ENCODE measurements at regions of chr12 and their contacts with region 1.

Region 1: GRCh38 chr12:124388679-124389536 is 94.0 kb downstream of the RFLNA start:
- DNase-seq: peak; percentile 45 to 81 (median 68)
- ATAC-seq: peak; percentile 80
- H3K4me3 ChIP-seq: peak overlapping the region; percentile 53
- H3K4me3 Mint-ChIP-seq: peak overlapping the region; percentile 76
- H3K27ac ChIP-seq: no peak overlapping the region
- H3K27ac Mint-ChIP-seq: peak overlapping the region; percentile 69
- H3K4me1 ChIP-seq: peaks cover 54% of the 10 kb centered on the region
- H3K4me1 Mint-ChIP-seq: peaks cover 22% of the 10 kb centered on the region
- H3K27me3 ChIP-seq: no peaks in the 10 kb centered on the region
- H3K27me3 Mint-ChIP-seq: no peaks in the 10 kb centered on the region
- CTCF ChIP-seq: no peak

Region 2: GRCh38 chr12:123713398-123713797 is 675.5 kb before region 1 on chr12:
- CTCF ChIA-PET with region 1: no interaction called
- POLR2A ChIA-PET with region 1: no interaction called
- intact Hi-C with region 1: no loop called
- DNase-seq: peak in 1 of 14 experiments; percentile 17
- ATAC-seq: no peak
- H3K4me3 ChIP-seq: peak overlapping the region; percentile 87
- H3K4me3 Mint-ChIP-seq: peak overlapping the region; percentile 85
- H3K27ac ChIP-seq: no peak overlapping the region
- H3K27ac Mint-ChIP-seq: peak overlapping the region; percentile 62
- H3K4me1 ChIP-seq: peaks cover 27% of the 10 kb centered on the region
- H3K4me1 Mint-ChIP-seq: peaks cover 38% of the 10 kb centered on the region
- H3K27me3 ChIP-seq: no peaks in the 10 kb centered on the region
- H3K27me3 Mint-ChIP-seq: no peaks in the 10 kb centered on the region
- CTCF ChIP-seq: no peak

Region 3: DNA sequence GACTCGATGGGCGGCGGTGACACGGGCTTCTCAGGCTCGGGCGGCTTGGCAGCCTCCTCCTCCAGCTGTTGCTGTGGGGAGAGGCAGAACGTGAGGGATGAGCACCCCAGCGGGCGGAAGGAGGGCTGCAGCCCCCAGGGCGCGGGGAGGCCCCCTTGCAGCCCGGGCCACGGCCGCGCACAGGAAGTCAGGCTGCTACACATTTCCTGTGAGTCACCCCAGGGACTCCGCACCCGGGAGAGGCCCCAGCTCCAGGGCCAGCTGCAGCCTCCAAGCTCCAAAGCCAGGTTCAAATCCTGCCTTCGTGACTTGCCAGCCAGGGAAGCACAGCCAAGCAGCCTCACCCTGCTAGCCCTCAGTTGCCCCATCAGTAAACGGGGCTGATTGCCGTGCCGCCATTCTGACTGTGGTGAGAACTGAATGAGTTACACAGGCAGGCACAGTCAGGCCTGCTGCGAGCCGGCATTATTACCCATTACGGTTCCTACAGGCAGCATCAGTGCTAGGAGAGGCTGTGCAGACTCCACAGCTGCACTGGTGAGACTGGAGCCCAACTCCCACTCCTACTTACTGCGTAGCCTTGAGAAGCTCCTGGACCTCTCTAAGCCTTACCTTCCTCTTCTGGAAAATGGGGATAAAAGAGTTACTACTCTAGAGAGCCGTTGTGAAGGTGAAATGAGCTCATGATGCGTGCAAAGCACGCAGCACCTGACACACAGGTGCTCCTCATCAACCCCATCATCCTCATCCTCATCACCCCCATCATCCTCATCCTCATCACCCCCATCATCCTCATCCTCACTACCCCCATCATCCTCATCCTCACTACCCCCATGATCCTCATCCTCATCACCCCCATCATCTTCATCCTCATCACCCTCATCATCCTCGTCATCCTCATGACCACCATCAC is 77.6 kb after region 1 on chr12:
- CTCF ChIA-PET with region 1: no interaction called
- POLR2A ChIA-PET with region 1: interaction called, 5 read pairs
- intact Hi-C with region 1: loop called (anchors 5 kb)
- DNase-seq: peak; percentile 78 to 96 (median 86)
- ATAC-seq: peak; percentile 92
- H3K4me3 ChIP-seq: peak overlapping the region; percentile 52
- H3K4me3 Mint-ChIP-seq: peak overlapping the region; percentile 74
- H3K27ac ChIP-seq: peak overlapping the region; percentile 74 to 82
- H3K27ac Mint-ChIP-seq: peak overlapping the region; percentile 91
- H3K4me1 ChIP-seq: peaks cover 50% of the 10 kb centered on the region
- H3K4me1 Mint-ChIP-seq: peaks cover 59% of the 10 kb centered on the region
- H3K27me3 ChIP-seq: no peaks in the 10 kb centered on the region
- H3K27me3 Mint-ChIP-seq: no peaks in the 10 kb centered on the region
- CTCF ChIP-seq: peak; percentile 57

Region 4: DNA sequence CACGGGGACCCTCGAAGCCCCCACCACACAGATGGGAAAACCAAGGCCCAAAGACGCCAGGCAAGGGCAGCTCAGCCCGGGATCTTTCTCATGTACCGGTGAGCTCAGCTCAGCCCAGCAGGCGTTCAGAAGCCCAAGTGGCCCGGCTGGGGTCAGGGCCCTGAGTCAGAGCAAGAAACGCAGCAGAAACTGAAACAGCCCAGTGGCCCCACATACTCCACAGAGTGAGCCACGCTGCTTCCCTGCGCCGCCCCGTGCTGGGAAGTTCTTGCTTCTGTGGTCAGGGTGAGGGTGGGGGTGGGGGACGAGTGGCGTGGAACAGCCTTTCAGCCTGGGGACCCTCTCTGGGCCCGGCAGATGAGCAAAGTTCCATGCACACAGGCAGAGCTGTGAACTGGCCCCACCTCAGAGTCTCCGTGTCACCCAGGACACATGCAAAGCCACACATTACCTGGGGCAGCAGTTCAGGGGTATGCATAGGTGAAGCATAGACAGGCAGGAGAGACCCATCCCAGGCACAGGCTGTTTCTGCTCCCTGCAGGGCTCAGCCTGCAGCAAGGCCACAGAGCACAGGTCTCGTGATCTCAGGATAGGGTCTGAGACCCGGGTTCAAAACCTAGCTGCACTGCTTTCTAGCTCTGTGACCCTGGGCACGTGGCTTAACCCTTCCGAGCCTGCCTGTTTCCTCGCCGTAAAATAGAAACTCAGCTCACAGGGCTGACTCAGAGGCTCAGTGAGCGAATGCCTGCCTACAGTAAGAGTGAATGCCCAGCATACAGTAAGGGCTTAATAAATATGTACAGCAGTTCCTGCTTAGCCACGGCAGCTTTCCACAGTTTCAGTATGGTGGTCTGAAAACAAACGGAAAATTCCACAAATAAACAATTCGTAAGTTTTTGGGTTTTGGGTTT is 156.9 kb after region 1 on chr12:
- CTCF ChIA-PET with region 1: no interaction called
- POLR2A ChIA-PET with region 1: no interaction called
- intact Hi-C with region 1: loop called (anchors 5 to 10 kb)
- DNase-seq: peak in 5 of 14 experiments; percentile 18 to 68 (median 44)
- ATAC-seq: peak; percentile 54
- H3K4me3 ChIP-seq: peak overlapping the region; percentile 27
- H3K4me3 Mint-ChIP-seq: peak overlapping the region; percentile 48
- H3K27ac ChIP-seq: no peak overlapping the region
- H3K27ac Mint-ChIP-seq: peak overlapping the region; percentile 44
- H3K4me1 ChIP-seq: peaks cover 75% of the 10 kb centered on the region
- H3K4me1 Mint-ChIP-seq: peaks cover 66% of the 10 kb centered on the region
- H3K27me3 ChIP-seq: no peaks in the 10 kb centered on the region
- H3K27me3 Mint-ChIP-seq: no peaks in the 10 kb centered on the region
- CTCF ChIP-seq: no peak

Region 5: DNA sequence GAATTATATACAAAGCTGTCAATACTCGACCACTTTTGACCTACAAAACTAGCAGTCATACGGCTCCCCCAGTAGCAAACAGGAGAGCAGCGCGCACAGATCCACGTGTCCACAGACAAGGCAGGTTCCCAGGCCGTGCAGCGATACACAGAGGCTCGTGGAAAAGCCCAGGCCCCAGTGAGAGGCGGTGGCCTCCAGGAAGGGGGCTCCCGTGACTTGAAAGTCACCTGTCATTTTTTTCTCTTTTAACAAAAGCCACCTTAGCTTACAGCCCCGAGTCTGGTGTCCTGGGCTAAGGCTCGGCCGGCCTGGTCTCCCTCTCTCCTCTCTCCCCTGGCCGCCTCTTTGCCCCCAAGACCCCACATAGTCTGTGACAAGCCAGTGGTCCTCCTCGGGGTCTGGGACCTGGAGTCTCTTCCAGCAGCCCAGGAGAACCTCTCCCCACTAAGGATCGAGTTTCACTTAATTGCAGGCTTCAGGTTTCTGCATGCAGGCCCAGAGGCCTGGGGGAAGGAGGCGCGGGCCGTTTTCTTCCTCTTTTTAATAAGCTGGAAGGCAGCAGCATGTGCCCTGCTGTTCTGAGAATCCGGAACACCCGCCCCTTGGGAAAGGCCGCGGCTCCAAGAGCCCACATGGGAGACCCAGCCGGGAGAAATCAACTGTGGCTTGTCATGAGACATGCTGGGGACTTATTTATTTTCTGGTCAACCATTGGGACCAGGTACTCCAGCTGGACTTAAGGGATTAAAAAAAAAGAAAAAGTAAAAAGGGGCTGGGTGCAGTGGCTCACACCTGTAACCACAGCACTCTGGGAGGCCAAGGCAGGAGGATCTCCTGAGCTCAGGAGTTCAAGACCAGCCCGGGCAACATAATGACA is 162.6 kb after region 1 on chr12:
- CTCF ChIA-PET with region 1: no interaction called
- POLR2A ChIA-PET with region 1: no interaction called
- intact Hi-C with region 1: loop called (anchors 5 to 10 kb)
- DNase-seq: peak in 2 of 14 experiments; percentile 55
- ATAC-seq: peak; percentile 25
- H3K4me3 ChIP-seq: no peak overlapping the region
- H3K4me3 Mint-ChIP-seq: no peak overlapping the region
- H3K27ac ChIP-seq: no peak overlapping the region
- H3K27ac Mint-ChIP-seq: no peak overlapping the region
- H3K4me1 ChIP-seq: peaks cover 77% of the 10 kb centered on the region
- H3K4me1 Mint-ChIP-seq: peaks cover 83% of the 10 kb centered on the region
- H3K27me3 ChIP-seq: no peaks in the 10 kb centered on the region
- H3K27me3 Mint-ChIP-seq: no peaks in the 10 kb centered on the region
- CTCF ChIP-seq: no peak

Measured in CD4-positive, alpha-beta T cell (primary cell).